HCT116 (cell line): ENCODE measurements at regions of chr3 and their contacts with region 1.

Region 1: GRCh38 chr3:118884748-118885206 is 149.9 kb downstream of the IGSF11 start:
- DNase-seq: peak; percentile 23
- ATAC-seq: peak; percentile 88
- H3K4me3 ChIP-seq: no peak overlapping the region
- H3K27ac ChIP-seq: no peak overlapping the region
- H3K4me1 ChIP-seq: no peaks in the 10 kb centered on the region
- H3K27me3 ChIP-seq: peaks cover 51% of the 10 kb centered on the region
- CTCF ChIP-seq: peak; percentile 95 to 99 (median 97)
- POLR2A ChIP-seq: no peak
- RAD21 ChIP-seq: peak; percentile 68

Region 2: GRCh38 chr3:119034256-119035013 is 149.7 kb after region 1 on chr3 and contains the start of gene IGSF11:
- CTCF ChIA-PET with region 1: interaction called, 42 read pairs
- POLR2A ChIA-PET with region 1: no interaction called
- RAD21 ChIA-PET with region 1: interaction called in 1 of 2 experiments, 4 read pairs
- intact Hi-C with region 1: loop called (anchors 2 kb)
- DNase-seq: no peak
- ATAC-seq: peak; percentile 93
- H3K4me3 ChIP-seq: peak within 1 kb of the TSS; percentile 21 to 36
- H3K27ac ChIP-seq: no peak within 1 kb of the TSS
- H3K4me1 ChIP-seq: peaks cover 0 to 12% of the 10 kb centered on the region in 2 experiments; a peak in 2 of 4 replicates
- H3K27me3 ChIP-seq: peaks cover 64% of the 10 kb centered on the region
- CTCF ChIP-seq: peak; percentile 15 to 37 (median 21); a peak in 3 of 6 replicates
- POLR2A ChIP-seq: no peak
- RAD21 ChIP-seq: peak; percentile 24; the same call in 1 of the 2 replicates
- total RNA-seq, gene IGSF11: not detected

Region 3: DNA sequence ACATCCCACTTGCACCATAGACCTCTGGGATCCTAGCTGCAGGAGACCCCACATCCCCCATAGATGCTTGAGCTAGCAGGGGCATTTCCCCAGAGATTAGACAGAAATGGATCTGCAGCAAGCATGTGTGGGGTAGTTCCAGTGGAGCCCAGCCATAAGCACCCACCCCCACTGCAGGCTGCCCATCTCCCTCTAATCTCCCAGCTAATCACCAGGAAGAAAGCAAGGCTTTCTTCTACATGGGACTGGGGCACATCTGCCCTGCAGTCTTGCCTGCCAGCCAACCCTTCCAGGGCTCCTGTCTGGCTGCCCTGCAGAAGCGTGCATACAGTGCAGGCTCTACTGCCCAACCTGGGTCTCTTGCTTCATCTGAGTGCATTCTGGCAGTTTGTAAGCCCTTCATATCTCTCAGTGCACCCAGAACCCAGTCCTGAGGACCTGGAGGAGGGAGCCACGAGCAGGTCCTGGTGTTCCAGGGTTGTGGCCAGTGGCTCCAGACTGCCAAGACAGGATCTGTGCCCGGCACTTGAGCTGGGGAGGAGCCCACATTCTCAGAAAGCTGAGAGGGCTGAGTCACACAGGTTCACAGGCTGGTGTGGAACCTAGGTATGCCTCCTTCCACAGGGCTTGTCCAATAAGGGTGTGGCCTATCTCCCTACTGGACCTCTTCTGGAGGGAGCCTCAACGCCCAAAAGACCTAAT is 199.7 kb after region 1 on chr3:
- CTCF ChIA-PET with region 1: interaction called, 268 read pairs
- POLR2A ChIA-PET with region 1: no interaction called
- RAD21 ChIA-PET with region 1: no interaction called
- intact Hi-C with region 1: no loop called
- DNase-seq: peak; percentile 42
- ATAC-seq: peak; percentile 98
- H3K4me3 ChIP-seq: 0 out of 4 replicates have a peak overlapping the region, but pooled peaks of 1 of the 2 experiments have one; percentile 22
- H3K27ac ChIP-seq: no peak overlapping the region
- H3K4me1 ChIP-seq: peaks cover 4 to 15% of the 10 kb centered on the region in 2 experiments; a peak in 3 of 4 replicates
- H3K27me3 ChIP-seq: no peaks in the 10 kb centered on the region
- CTCF ChIP-seq: no peak
- POLR2A ChIP-seq: no peak
- RAD21 ChIP-seq: no peak

Region 4: DNA sequence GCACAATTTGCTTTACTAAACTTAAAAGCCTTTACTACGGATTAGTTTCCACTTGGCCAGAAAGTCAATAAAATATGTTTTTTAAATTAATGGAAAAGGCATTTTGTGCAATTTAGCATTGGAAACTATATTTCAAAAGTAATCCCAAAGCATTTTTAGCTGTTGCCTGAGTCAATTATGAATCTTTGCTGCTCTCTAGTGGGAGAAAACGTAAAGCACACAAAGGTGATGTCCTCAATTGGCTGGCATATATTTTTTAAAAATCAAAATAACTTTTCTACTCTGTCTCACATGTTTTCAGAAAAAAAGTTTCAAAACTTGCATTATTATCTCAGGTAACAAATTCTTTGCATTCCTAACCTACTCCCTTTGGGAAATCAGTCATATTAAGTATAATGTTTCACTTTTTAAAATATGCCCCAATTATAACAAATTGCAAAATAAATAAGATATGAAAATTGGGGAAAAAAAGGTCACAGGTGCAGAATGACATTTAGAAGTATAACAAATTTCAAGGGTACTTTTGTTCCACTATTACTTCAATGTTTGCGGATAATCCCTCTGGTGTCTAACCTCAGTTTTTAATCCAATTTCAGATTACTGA is 213.9 kb after region 1 on chr3:
- CTCF ChIA-PET with region 1: interaction called, 268 read pairs
- POLR2A ChIA-PET with region 1: interaction called, 3 read pairs
- RAD21 ChIA-PET with region 1: interaction called, 4 to 14 read pairs
- intact Hi-C with region 1: loop called (anchors 1 kb)
- DNase-seq: peak; percentile 13
- ATAC-seq: peak; percentile 58
- H3K4me3 ChIP-seq: no peak overlapping the region
- H3K27ac ChIP-seq: no peak overlapping the region
- H3K4me1 ChIP-seq: no peaks in the 10 kb centered on the region
- H3K27me3 ChIP-seq: no peaks in the 10 kb centered on the region
- CTCF ChIP-seq: peak; percentile 56 to 80 (median 74)
- POLR2A ChIP-seq: no peak
- RAD21 ChIP-seq: peak; percentile 83

Region 5: GRCh38 chr3:119240591-119241434 is 356.0 kb after region 1 on chr3 and contains the start of gene B4GALT4:
- CTCF ChIA-PET with region 1: interaction called, 44 read pairs
- POLR2A ChIA-PET with region 1: interaction called, 5 read pairs
- RAD21 ChIA-PET with region 1: interaction called in 1 of 2 experiments, 3 read pairs
- intact Hi-C with region 1: loop called (anchors 1 kb)
- DNase-seq: peak; percentile 74
- ATAC-seq: peak; percentile 91
- H3K4me3 ChIP-seq: peak within 1 kb of the TSS; percentile 67 to 75
- H3K27ac ChIP-seq: peak within 1 kb of the TSS; percentile 73
- H3K4me1 ChIP-seq: peaks cover 6 to 19% of the 10 kb centered on the region in 2 experiments
- H3K27me3 ChIP-seq: no peaks in the 10 kb centered on the region
- CTCF ChIP-seq: no peak
- POLR2A ChIP-seq: peak; percentile 79
- RAD21 ChIP-seq: no peak
- total RNA-seq, gene B4GALT4: 15.9 TPM

Region 6: GRCh38 chr3:119380697-119381096 is 495.9 kb after region 1 on chr3:
- CTCF ChIA-PET with region 1: no interaction called
- POLR2A ChIA-PET with region 1: no interaction called
- RAD21 ChIA-PET with region 1: no interaction called
- intact Hi-C with region 1: loop called (anchors 10 kb)
- DNase-seq: peak; percentile 7
- ATAC-seq: peak; percentile 80
- H3K4me3 ChIP-seq: no peak overlapping the region
- H3K27ac ChIP-seq: no peak overlapping the region
- H3K4me1 ChIP-seq: no peaks in the 10 kb centered on the region
- H3K27me3 ChIP-seq: no peaks in the 10 kb centered on the region
- CTCF ChIP-seq: peak; percentile 9 to 42 (median 36); a peak in 4 of 6 replicates
- POLR2A ChIP-seq: no peak
- RAD21 ChIP-seq: peak; percentile 37